Breast epithelium (tissue), 4 donors: ENCODE measurements at regions of chr1 and their contacts with region 1.

Region 1: GRCh38 chr1:217687509-217687908 is 56.4 kb downstream of the SPATA17 start:
- DNase-seq: no peak
- H3K4me3 ChIP-seq: no peak overlapping the region
- H3K27ac ChIP-seq: no peak overlapping the region
- H3K4me1 ChIP-seq: no peaks in the 10 kb centered on the region
- H3K27me3 ChIP-seq: no peaks in the 10 kb centered on the region
- CTCF ChIP-seq: no peak
- POLR2A ChIP-seq: no peak

Region 2: GRCh38 chr1:216686860-216687766 is 1000.4 kb before region 1 on chr1:
- intact Hi-C with region 1: no loop called
- DNase-seq: no peak
- H3K4me3 ChIP-seq: no peak overlapping the region
- H3K27ac ChIP-seq: no peak overlapping the region
- H3K4me1 ChIP-seq: no peaks in the 10 kb centered on the region
- H3K27me3 ChIP-seq: no peaks in the 10 kb centered on the region
- CTCF ChIP-seq: no peak
- POLR2A ChIP-seq: no peak

Region 3: DNA sequence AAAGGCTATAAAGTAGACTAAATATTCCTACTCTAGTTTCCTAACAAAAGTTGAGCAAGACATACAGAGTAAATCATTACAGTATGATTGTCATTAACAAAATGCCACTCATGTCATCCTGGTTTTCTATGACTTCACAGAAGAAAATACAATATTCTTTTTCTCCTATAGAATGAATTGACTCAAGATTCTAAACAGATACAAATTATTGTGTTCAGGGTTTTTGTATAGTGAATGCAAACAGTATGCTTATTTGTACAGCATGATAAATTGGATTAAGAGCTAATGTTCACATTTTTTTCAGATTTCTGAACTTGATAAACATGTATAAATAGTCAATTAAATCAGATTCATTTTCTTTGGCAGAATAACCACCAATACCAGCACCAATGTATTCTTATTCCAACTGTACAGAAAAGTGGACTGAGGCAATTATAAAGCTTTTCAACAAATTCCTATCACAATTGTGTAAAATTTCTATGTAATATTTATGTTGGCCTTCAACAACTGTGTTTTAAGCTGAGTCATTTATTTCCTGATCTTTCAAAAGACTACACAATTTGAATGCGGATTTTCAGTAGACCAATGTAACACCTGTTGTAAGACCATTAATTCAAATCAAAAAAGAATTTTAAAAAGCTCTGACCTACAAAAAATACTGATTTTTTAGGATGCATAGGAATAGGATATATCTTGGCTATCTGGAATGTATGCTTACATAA is 82.3 kb before region 1 on chr1:
- intact Hi-C with region 1: loop called (anchors 5 kb)
- DNase-seq: no peak
- H3K4me3 ChIP-seq: no peak overlapping the region
- H3K27ac ChIP-seq: no peak overlapping the region
- H3K4me1 ChIP-seq: no peaks in the 10 kb centered on the region
- H3K27me3 ChIP-seq: no peaks in the 10 kb centered on the region
- CTCF ChIP-seq: no peak
- POLR2A ChIP-seq: no peak